Activated CD8-positive, alpha-beta T cell treated with anti-CD3 and anti-CD28 coated beads, Interleukin-2, amount 10 ng/mL, durations not matched to agents 7 days and 5 days (primary cell): ENCODE measurements at regions of chr9 and their contacts with region 1.

Region 1: DNA sequence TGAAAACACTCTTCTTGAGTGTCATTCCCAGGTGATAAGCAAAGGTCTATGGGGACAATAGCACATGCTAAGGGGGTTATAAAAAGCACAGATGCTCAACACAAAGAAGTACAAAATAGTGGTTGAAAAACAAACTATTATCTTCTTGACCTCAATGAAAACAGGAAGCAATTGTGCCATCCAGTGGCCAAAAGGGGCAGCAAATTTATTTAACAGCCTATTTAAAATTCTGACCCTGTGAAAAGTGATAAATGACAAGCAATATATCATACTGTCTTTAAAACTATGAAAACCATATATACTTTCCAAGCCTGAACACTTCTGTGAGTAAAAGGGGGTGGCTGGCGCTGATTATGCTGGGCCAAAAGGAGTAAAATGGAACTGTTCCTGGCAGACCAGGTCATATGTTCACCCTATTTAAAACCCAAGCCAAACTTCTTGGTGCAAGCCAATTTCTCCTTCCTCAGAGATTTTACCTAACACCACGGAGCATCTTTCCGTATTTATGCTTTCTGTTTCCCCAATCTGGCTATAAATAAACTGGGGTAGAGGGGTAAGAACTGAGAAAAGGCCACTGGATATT is 29.7 kb downstream of the TEX10 start:
- DNase-seq: peak; percentile 42
- ATAC-seq: peak; percentile 19
- H3K4me3 Mint-ChIP-seq: no peak overlapping the region
- H3K27ac Mint-ChIP-seq: no peak overlapping the region
- H3K4me1 Mint-ChIP-seq: no peaks in the 10 kb centered on the region
- H3K27me3 Mint-ChIP-seq: no peaks in the 10 kb centered on the region

Region 2: DNA sequence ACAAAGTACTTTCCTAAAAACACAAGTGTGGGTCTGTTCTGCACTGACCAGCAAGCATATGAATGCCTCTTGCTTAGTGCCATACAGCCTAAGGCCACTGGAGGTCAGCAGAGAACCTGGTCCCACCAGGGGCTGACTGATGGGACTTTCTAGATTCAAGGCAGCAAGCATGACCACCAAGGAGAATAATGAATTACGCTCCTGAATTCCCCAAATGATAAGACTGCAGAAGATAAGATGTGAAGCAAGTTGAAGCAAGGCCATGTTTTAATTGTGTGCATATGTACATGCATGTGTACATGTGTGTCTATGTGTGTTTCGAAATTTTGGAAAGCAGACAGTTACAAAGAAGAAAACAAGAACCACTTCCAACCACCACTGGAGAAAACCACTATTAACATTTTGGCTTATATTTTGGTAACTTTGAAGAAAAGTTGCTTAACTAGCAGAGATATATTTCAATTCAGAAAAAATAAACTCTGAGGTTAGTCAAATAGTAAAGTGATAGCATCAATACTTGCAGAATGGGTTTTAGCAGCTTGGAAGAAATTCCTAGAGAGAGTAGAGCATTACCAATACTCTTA is 294.8 kb before region 1 on chr9:
- CTCF ChIA-PET with region 1: interaction called, 18 read pairs
- POLR2A ChIA-PET with region 1: no interaction called
- DNase-seq: peak; percentile 76
- ATAC-seq: peak; percentile 92
- H3K4me3 Mint-ChIP-seq: no peak overlapping the region
- H3K27ac Mint-ChIP-seq: no peak overlapping the region
- H3K4me1 Mint-ChIP-seq: peaks cover 6% of the 10 kb centered on the region
- H3K27me3 Mint-ChIP-seq: no peaks in the 10 kb centered on the region

Region 3: GRCh38 chr9:100167915-100168654 is 155.0 kb before region 1 on chr9:
- CTCF ChIA-PET with region 1: no interaction called
- POLR2A ChIA-PET with region 1: no interaction called
- DNase-seq: no peak
- ATAC-seq: no peak
- H3K4me3 Mint-ChIP-seq: no peak overlapping the region
- H3K27ac Mint-ChIP-seq: no peak overlapping the region
- H3K4me1 Mint-ChIP-seq: no peaks in the 10 kb centered on the region
- H3K27me3 Mint-ChIP-seq: no peaks in the 10 kb centered on the region

Region 4: DNA sequence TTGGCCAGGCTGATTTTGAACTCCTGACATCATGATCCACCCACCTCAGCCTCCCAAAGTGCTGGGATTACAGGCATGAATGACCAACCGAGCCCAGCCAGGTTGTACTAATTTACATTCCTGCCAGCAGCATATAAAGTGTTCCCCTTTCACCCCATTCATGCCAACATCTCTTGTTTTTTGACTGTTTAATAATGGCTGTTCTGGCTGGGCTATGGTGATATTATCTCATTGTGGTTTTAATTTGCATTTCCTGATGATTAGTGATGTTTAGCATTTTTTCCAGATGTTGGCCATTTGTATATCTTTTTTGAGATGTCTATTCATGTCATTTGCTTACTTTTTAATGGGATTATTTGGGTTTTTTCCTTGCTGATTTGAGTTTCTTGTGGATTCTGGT is 136.7 kb before region 1 on chr9:
- CTCF ChIA-PET with region 1: no interaction called
- POLR2A ChIA-PET with region 1: no interaction called
- DNase-seq: no peak
- ATAC-seq: no peak
- H3K4me3 Mint-ChIP-seq: no peak overlapping the region
- H3K27ac Mint-ChIP-seq: no peak overlapping the region
- H3K4me1 Mint-ChIP-seq: no peaks in the 10 kb centered on the region
- H3K27me3 Mint-ChIP-seq: no peaks in the 10 kb centered on the region

Region 5: GRCh38 chr9:100340224-100340623 is 17.2 kb after region 1 on chr9:
- CTCF ChIA-PET with region 1: interaction called, 25 read pairs
- POLR2A ChIA-PET with region 1: no interaction called
- DNase-seq: no peak
- ATAC-seq: no peak
- H3K4me3 Mint-ChIP-seq: no peak overlapping the region
- H3K27ac Mint-ChIP-seq: no peak overlapping the region
- H3K4me1 Mint-ChIP-seq: peaks cover 12% of the 10 kb centered on the region
- H3K27me3 Mint-ChIP-seq: no peaks in the 10 kb centered on the region

Region 6: GRCh38 chr9:100352727-100353505 is 29.9 kb after region 1 on chr9 and contains the start of gene TEX10:
- CTCF ChIA-PET with region 1: interaction called, 35 read pairs
- POLR2A ChIA-PET with region 1: no interaction called
- DNase-seq: peak; percentile 91
- ATAC-seq: peak; percentile 88
- H3K4me3 Mint-ChIP-seq: peak within 1 kb of the TSS; percentile 99
- H3K27ac Mint-ChIP-seq: peak within 1 kb of the TSS; percentile 94
- H3K4me1 Mint-ChIP-seq: peaks cover 55% of the 10 kb centered on the region
- H3K27me3 Mint-ChIP-seq: no peaks in the 10 kb centered on the region
- total RNA-seq, gene TEX10: 20.6 to 21.0 TPM

Region 7: DNA sequence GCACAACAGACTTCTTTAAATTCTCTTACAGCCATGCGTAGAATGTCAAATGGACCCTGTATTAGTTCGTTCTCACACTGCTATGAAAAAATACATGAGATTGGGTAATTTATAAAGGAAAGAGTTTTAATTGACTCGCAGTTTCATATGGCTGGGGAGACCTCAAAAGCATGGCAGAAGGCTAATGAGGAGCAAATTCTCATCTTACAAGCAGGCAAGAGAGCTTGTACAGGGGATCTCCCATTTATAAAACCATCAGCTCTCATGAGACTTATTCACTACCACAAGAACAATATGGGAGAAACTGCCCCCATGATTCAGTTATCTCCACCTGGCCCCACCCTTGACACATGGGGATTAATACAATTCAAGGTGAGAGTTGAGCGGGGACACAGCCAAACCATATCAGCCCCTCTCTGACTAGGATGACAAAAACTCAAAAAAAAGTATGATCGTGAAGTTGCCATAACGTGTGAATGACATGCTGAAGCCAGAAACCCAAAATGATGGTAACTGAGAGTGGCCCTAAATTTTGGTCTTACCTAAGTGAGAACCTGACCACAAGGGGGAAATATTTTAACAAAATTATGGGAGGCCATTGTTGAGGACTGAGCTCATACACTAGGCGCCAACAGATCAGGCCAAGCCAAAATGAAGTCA is 47.1 kb after region 1 on chr9:
- CTCF ChIA-PET with region 1: no interaction called
- POLR2A ChIA-PET with region 1: no interaction called
- DNase-seq: no peak
- ATAC-seq: no peak
- H3K4me3 Mint-ChIP-seq: no peak overlapping the region
- H3K27ac Mint-ChIP-seq: no peak overlapping the region
- H3K4me1 Mint-ChIP-seq: no peaks in the 10 kb centered on the region
- H3K27me3 Mint-ChIP-seq: no peaks in the 10 kb centered on the region

Region 8: GRCh38 chr9:100394816-100395215 is 71.8 kb after region 1 on chr9:
- CTCF ChIA-PET with region 1: no interaction called
- POLR2A ChIA-PET with region 1: no interaction called
- DNase-seq: no peak
- ATAC-seq: no peak
- H3K4me3 Mint-ChIP-seq: no peak overlapping the region
- H3K27ac Mint-ChIP-seq: no peak overlapping the region
- H3K4me1 Mint-ChIP-seq: no peaks in the 10 kb centered on the region
- H3K27me3 Mint-ChIP-seq: no peaks in the 10 kb centered on the region